ENCODE measurements at regions of chr4 and their contacts with region 1.

Region 1: DNA sequence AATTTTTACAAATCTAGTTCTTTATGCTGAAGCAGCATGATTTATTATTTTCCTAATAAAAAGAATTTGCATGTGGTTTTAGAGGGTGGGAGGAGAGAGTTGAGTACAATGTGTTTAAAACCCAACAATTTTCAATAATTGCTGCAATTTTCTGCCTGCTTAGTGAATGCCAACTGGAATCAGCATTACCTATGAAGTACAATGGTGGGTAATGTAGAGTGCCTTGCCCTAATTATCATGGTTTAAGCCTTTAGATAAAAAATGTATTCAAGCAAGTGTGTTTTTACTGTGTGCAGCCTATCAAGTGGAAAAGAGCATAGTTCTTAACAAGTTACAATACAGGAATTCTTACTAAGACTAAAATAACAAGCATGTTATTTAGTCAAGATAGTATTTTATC is 77.9 kb upstream of the ANKRD50 start:
- DNase-seq: no peak
- H3K4me3 ChIP-seq: no peak overlapping the region
- H3K27me3 ChIP-seq: no peaks in the 10 kb centered on the region
- CTCF ChIP-seq: no peak

Region 2: GRCh38 chr4:124224256-124224655 is 566.2 kb before region 1 on chr4:
- CTCF ChIA-PET with region 1: no interaction called
- POLR2A ChIA-PET with region 1: no interaction called
- DNase-seq: no peak
- H3K4me3 ChIP-seq: no peak overlapping the region
- H3K27me3 ChIP-seq: no peaks in the 10 kb centered on the region
- CTCF ChIP-seq: no peak

Region 3: DNA sequence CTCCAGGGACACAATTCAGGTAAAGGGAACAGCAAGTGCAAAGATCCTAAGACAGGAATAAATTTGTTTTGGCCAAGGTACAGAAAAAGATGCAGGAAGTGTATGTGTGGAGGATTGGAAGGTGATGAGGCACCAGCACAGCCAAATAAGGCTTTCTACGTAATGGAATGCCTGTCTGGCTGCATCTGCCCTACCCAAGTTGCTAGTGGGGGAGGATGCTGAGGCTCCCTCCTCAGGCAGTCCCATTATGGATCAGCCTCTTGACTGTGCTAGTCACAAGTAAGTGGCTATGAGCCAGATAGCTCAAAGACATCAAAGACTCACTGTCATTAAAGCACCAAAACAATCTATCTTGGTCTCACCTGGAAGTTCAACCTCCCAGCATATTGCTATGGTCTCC is 223.4 kb after region 1 on chr4:
- CTCF ChIA-PET with region 1: no interaction called
- POLR2A ChIA-PET with region 1: interaction called, 20 read pairs
- DNase-seq: no peak
- H3K4me3 ChIP-seq: no peak overlapping the region
- H3K27me3 ChIP-seq: no peaks in the 10 kb centered on the region
- CTCF ChIP-seq: no peak

Region 4: GRCh38 chr4:125432104-125432503 is 641.6 kb after region 1 on chr4:
- CTCF ChIA-PET with region 1: no interaction called
- POLR2A ChIA-PET with region 1: no interaction called
- DNase-seq: no peak
- H3K4me3 ChIP-seq: no peak overlapping the region
- H3K27me3 ChIP-seq: no peaks in the 10 kb centered on the region
- CTCF ChIP-seq: no peak

Measured in BJ (cell line).